CD4-positive, alpha-beta memory T cell (primary cell): ENCODE measurements at regions of chr10 and their contacts with region 1.

Region 1: GRCh38 chr10:110022716-110023504 is 15.1 kb downstream of the ADD3 start:
- DNase-seq: no peak
- H3K4me3 ChIP-seq: no peak overlapping the region
- H3K4me3 Mint-ChIP-seq: peak overlapping the region in 5 of 8 donors; percentile 2 to 68 (median 33)
- H3K27ac ChIP-seq: no peak overlapping the region
- H3K27ac Mint-ChIP-seq: peak overlapping the region; percentile 1 to 75 (median 35)
- H3K4me1 ChIP-seq: peaks cover 70% of the 10 kb centered on the region
- H3K4me1 Mint-ChIP-seq: peaks cover 56 to 83% (median 72%) of the 10 kb centered on the region in 4 donors
- H3K27me3 ChIP-seq: no peaks in the 10 kb centered on the region
- H3K27me3 Mint-ChIP-seq: no peaks in the 10 kb centered on the region

Region 2: DNA sequence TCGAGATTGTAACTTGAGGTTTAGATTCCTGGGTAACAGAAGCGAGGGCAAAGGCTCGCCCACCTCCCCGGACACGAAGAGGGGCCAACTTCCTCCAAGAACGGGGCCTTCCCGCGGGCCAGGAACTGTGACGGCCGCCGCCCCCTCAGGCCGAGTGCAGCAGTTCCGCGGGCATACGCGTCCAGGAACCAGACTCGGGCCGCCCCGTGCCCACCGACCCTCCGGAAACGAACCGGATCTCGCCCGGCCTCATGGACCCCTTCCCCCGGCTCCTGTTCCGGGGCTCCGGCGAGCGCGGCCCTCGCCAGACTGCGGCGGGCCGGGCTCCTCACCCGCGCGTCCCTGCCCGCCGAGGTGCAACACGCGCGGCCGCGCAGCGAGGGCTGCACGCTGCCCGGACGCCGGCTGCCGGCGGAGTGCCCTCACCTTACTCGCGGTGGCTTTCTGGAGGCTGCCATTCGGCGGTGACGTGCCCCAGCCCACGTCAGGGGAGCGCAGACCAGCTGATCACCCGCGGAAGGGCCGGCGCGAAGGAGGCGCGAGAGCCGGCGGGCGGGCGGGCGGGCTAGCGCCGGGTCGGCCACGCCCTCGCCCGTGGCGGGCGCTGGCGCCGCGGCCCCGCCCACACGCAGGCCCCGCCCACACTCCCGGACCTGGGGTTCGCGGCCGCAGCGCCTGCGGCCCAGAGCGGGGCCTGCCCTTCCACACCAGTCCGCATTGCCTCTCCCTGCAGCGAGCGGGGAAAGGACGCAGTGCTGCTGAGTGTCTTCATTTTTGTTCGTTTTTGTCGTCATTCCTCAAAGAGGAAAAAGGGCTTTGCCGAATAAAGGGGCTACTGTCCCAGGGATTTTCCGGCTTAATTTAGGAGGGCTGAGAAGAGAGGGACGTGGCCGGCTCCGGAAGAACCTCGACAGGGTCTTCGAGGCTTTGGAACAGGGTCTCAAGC is 99.7 kb before region 1 on chr10 and contains the start of gene XPNPEP1:
- CTCF ChIA-PET with region 1: no interaction called
- POLR2A ChIA-PET with region 1: no interaction called
- intact Hi-C with region 1: no loop called
- DNase-seq: peak; percentile 75 to 83 (median 79)
- H3K4me3 ChIP-seq: peak within 1 kb of the TSS; percentile 68 to 74
- H3K4me3 Mint-ChIP-seq: peak within 1 kb of the TSS; percentile 88 to 95 (median 92)
- H3K27ac ChIP-seq: peak within 1 kb of the TSS; percentile 86
- H3K27ac Mint-ChIP-seq: peak within 1 kb of the TSS; percentile 86 to 98 (median 96)
- H3K4me1 ChIP-seq: peaks cover 54% of the 10 kb centered on the region
- H3K4me1 Mint-ChIP-seq: peaks cover 39 to 57% (median 47%) of the 10 kb centered on the region in 4 donors
- H3K27me3 ChIP-seq: no peaks in the 10 kb centered on the region
- H3K27me3 Mint-ChIP-seq: no peaks in the 10 kb centered on the region
- total RNA-seq, gene XPNPEP1: 59.0 to 63.3 TPM

Region 3: GRCh38 chr10:110045772-110046171 is 22.9 kb after region 1 on chr10:
- CTCF ChIA-PET with region 1: no interaction called
- POLR2A ChIA-PET with region 1: no interaction called
- intact Hi-C with region 1: loop called (anchors 2 kb)
- DNase-seq: no peak
- H3K4me3 ChIP-seq: no peak overlapping the region
- H3K4me3 Mint-ChIP-seq: no peak overlapping the region
- H3K27ac ChIP-seq: no peak overlapping the region
- H3K27ac Mint-ChIP-seq: peak overlapping the region in 4 of 7 donors; percentile 20 to 74 (median 52)
- H3K4me1 ChIP-seq: peaks cover 39% of the 10 kb centered on the region
- H3K4me1 Mint-ChIP-seq: peaks cover 36 to 65% (median 53%) of the 10 kb centered on the region in 4 donors
- H3K27me3 ChIP-seq: no peaks in the 10 kb centered on the region
- H3K27me3 Mint-ChIP-seq: no peaks in the 10 kb centered on the region